Activated naive CD4-positive, alpha-beta T cell treated with anti-CD3 and anti-CD28 coated beads for 36 hours (primary cell): ENCODE measurements at regions of chr7 and their contacts with region 1.

Region 1: DNA sequence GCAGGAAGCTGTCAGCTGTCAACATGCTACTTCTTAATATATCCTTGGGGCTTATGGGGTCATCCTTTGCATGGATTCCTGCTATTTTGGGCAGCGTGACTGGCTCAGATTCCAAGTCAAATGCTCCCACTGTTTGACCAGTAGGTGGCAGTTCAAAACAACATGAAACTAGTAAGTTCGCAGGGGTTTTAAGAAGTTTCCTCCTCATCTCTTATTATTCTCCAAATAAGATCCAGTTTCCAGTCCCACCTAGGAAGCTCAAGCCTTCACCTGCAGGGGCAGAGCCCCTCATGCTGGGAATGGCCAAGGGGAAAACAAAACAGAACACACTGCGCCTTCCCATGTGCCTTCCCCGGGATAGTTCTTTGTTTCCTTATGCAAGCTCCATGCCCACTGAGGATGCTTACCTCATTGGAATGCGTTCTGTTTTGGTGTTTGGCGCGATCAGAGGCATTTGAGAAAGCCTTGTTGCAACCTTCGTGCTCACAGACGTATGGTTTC is 259.8 kb downstream of the GLI3 start:
- DNase-seq: peak; percentile 15
- H3K4me3 Mint-ChIP-seq: no peak overlapping the region
- H3K27ac Mint-ChIP-seq: no peak overlapping the region
- H3K4me1 Mint-ChIP-seq: no peaks in the 10 kb centered on the region
- H3K27me3 Mint-ChIP-seq: peaks cover 9% of the 10 kb centered on the region

Region 2: DNA sequence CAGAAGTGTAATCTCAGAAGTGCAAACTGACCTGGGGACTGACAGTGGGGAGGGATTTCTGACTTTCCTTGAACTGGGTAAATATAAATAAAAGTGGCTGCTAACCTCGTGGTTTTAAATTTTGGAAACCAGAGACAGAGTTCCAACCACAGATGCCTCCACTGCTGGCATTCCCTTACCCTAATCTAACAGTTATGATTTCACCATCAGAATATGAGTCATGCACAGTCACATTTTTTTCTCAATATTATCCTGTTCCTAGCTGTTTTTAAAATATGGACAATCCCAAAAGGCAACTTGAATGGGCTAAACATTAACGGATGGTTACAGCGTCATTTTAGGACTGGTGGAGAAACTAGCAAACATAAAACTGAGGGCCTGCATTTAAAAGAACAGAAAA is 10.0 kb before region 1 on chr7:
- CTCF ChIA-PET with region 1: no interaction called
- intact Hi-C with region 1: no loop called
- DNase-seq: no peak
- H3K4me3 Mint-ChIP-seq: no peak overlapping the region
- H3K27ac Mint-ChIP-seq: no peak overlapping the region
- H3K4me1 Mint-ChIP-seq: no peaks in the 10 kb centered on the region
- H3K27me3 Mint-ChIP-seq: no peaks in the 10 kb centered on the region

Region 3: GRCh38 chr7:42690794-42691639 is 713.8 kb after region 1 on chr7:
- CTCF ChIA-PET with region 1: no interaction called
- intact Hi-C with region 1: loop called (anchors 1 kb)
- DNase-seq: no peak
- H3K4me3 Mint-ChIP-seq: no peak overlapping the region
- H3K27ac Mint-ChIP-seq: no peak overlapping the region
- H3K4me1 Mint-ChIP-seq: no peaks in the 10 kb centered on the region
- H3K27me3 Mint-ChIP-seq: no peaks in the 10 kb centered on the region

Region 4: DNA sequence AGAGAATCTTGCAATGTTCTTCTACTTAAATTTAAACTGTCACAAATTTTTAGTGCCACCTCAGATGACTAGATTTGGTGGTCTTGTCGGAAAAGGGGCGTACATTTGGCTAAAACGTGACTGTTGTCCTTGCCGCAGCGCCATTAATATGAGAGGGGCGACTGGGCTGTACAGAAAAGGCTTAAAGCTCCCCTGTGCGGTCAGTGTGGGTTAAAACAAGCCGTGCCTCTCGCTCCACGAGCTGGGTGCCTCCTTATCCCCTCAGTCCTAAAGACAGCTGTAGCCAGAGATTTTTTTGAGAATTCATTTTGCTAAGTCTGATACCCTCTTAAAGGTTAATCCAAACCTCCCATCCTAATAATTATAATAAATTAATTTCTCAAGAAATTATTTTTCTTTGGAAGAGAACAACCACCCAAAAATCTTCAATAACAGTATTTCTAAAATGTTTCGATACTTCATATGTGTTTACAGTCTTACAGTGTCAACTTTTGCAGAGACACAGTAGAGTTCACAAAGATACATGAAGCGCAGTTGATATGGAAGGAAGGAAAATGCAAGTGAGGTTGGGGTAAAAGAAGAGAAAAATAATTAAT is 866.1 kb after region 1 on chr7:
- CTCF ChIA-PET with region 1: interaction called, 6 read pairs
- intact Hi-C with region 1: loop called (anchors 5 kb)
- DNase-seq: peak; percentile 45
- H3K4me3 Mint-ChIP-seq: no peak overlapping the region
- H3K27ac Mint-ChIP-seq: no peak overlapping the region
- H3K4me1 Mint-ChIP-seq: no peaks in the 10 kb centered on the region
- H3K27me3 Mint-ChIP-seq: peaks cover 17% of the 10 kb centered on the region

Region 5: GRCh38 chr7:42876182-42877068 is 899.2 kb after region 1 on chr7:
- CTCF ChIA-PET with region 1: no interaction called
- intact Hi-C with region 1: loop called (anchors 2 kb)
- DNase-seq: peak; percentile 82
- H3K4me3 Mint-ChIP-seq: no peak overlapping the region
- H3K27ac Mint-ChIP-seq: no peak overlapping the region
- H3K4me1 Mint-ChIP-seq: no peaks in the 10 kb centered on the region
- H3K27me3 Mint-ChIP-seq: no peaks in the 10 kb centered on the region